Thyroid gland (tissue), 4 donors: ENCODE measurements at regions of chr9 and their contacts with region 1.

Region 1: GRCh38 chr9:126690431-126691350 is 77.0 kb downstream of the LMX1B start:
- DNase-seq: peak; percentile 53 to 54
- H3K4me3 ChIP-seq: no peak overlapping the region
- H3K27ac ChIP-seq: no peak overlapping the region
- H3K4me1 ChIP-seq: no peaks in the 10 kb centered on the region
- H3K27me3 ChIP-seq: no peaks in the 10 kb centered on the region
- CTCF ChIP-seq: peak; percentile 39 to 73 (median 50)
- POLR2A ChIP-seq: no peak

Region 2: DNA sequence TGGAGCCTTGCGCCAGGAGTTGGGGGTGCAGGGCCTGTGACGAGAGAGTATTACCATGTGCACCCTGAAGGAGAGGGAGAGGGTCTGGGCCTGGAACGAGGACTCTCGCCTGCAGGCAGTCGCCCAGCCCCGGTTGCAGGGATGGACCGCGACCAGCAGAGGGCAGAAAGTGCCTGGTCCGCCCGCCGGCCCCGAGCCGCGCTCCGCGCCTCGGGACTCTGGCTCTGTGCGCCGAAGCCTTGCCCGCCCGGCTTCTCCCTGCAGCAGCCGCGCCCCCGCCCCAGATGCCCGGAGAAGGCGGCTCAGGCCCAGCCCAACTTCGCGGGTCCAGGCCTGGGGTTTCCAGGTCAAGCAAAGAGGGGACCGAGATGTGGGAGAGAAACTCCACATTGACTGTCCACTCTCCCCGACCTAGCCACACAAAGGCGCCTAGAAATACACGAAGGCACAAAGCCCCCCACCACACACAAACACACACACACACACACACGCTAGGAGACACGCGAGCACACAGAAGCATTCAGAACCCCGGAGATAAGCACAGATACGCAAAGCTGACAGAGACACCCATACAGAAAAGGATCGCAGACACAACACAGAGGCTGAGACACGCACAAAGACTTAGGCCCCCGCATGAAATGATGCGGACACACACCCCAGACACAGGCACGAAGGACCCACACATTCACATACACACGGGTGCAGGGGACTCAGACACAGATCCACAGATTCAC is 78.9 kb before region 1 on chr9:
- intact Hi-C with region 1: loop called (anchors 5 kb)
- DNase-seq: peak; percentile 74
- H3K4me3 ChIP-seq: peak overlapping the region in 1 of 3 donors; percentile 45
- H3K27ac ChIP-seq: no peak overlapping the region
- H3K4me1 ChIP-seq: peaks cover 13 to 57% of the 10 kb centered on the region in 2 donors
- H3K27me3 ChIP-seq: no peaks in the 10 kb centered on the region
- CTCF ChIP-seq: peak; percentile 45 to 93 (median 64)
- POLR2A ChIP-seq: peak in 1 of 2 donors; percentile 7